ENCODE measurements at regions of chr6 and their contacts with region 1.

Region 1: DNA sequence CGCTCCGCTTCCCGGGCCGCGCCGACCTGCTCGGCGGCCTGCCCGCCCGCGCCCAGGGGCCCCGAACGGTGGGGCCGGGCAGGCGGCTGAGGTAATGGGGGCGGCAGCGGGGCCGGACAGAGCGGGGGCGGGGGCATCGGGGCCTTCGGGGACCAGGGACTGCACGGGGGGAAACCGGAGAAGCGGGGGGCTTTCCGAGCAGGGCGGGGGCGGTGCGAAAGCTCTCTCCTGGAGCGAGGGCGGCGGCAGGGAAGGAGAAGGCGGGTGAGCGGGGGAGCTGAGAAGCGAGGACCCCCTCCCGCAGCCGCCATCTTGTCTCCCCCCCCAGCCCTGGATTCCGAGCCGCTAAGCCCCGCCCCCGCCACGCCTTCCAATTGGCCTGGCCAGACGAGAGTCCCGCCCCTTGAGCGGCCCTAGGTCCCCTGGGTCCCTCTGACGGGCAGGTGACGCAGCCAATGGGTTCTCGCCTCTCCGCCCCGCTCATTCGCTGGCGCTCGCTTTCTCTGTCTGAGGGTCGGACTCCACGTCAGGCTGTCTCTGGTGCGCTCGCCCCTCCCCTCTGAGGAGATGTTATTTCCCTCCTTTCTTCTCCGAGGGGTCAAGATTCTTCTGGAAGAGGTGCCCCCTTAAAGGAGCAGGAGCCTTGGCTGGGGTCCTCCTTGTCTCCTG is 470 bp downstream of the BRPF3 start:
- DNase-seq: peak; percentile 99
- ATAC-seq: peak; percentile 96
- H3K4me3 Mint-ChIP-seq: peak overlapping the region; percentile 84
- H3K27ac Mint-ChIP-seq: peak overlapping the region; percentile 94
- H3K4me1 Mint-ChIP-seq: peaks cover 46% of the 10 kb centered on the region
- H3K27me3 Mint-ChIP-seq: peaks cover 2% of the 10 kb centered on the region

Region 2: GRCh38 chr6:36083446-36083845 is 113.6 kb before region 1 on chr6:
- CTCF ChIA-PET with region 1: no interaction called
- POLR2A ChIA-PET with region 1: no interaction called
- DNase-seq: no peak
- ATAC-seq: no peak
- H3K4me3 Mint-ChIP-seq: no peak overlapping the region
- H3K27ac Mint-ChIP-seq: no peak overlapping the region
- H3K4me1 Mint-ChIP-seq: no peaks in the 10 kb centered on the region
- H3K27me3 Mint-ChIP-seq: no peaks in the 10 kb centered on the region

Region 3: DNA sequence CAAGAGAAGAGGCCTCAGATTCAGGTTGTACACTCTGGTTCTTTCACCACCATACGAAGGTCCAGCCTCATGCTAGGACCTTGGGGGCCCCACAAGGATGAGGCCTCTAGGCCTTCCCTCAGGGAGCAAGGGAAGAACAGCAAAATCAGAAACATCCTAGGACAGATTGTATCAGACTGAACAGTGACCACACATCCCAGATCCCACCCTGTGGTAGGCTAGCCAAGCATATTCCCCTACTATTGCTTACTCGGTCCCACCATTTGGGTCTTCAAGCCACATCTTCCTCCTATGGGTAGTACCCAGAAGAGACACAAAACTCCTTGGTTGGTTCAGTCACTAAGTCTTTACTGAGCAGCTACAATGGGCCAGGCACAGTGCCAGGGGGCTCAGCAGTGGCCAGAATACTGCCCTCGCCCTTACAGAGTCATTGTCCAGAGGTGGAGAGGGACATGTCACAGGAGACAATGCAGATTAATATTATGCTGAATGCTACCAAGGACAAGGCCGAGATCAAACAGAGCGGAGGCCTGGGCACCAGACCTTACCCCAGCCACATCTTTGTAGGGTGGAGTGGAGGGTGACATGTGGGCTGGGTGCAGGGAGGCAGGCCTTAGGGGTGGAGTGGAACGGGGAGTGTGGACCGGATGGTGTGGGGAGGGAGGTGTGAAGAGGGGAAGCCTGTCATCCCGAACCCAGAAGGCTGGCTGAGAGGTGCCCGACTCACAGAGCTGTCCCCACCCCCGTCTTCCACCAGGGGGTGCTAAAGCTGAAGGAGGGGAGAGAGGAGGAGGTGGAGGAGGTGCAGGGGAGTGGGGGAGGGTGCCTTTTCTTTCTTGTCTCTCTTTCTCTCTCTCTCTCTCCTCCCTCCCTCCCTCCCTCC is 73.5 kb before region 1 on chr6:
- CTCF ChIA-PET with region 1: interaction called, 14 read pairs
- POLR2A ChIA-PET with region 1: interaction called, 15 read pairs
- DNase-seq: peak; percentile 95
- ATAC-seq: peak; percentile 80
- H3K4me3 Mint-ChIP-seq: no peak overlapping the region
- H3K27ac Mint-ChIP-seq: peak overlapping the region; percentile 98
- H3K4me1 Mint-ChIP-seq: peaks cover 91% of the 10 kb centered on the region
- H3K27me3 Mint-ChIP-seq: no peaks in the 10 kb centered on the region

Region 4: GRCh38 chr6:36131511-36132245 is 65.3 kb before region 1 on chr6:
- CTCF ChIA-PET with region 1: interaction called, 10 read pairs
- POLR2A ChIA-PET with region 1: interaction called, 9 read pairs
- DNase-seq: peak; percentile 69
- ATAC-seq: peak; percentile 73
- H3K4me3 Mint-ChIP-seq: peak overlapping the region; percentile 86
- H3K27ac Mint-ChIP-seq: peak overlapping the region; percentile 93
- H3K4me1 Mint-ChIP-seq: peaks cover 62% of the 10 kb centered on the region
- H3K27me3 Mint-ChIP-seq: no peaks in the 10 kb centered on the region

Region 5: DNA sequence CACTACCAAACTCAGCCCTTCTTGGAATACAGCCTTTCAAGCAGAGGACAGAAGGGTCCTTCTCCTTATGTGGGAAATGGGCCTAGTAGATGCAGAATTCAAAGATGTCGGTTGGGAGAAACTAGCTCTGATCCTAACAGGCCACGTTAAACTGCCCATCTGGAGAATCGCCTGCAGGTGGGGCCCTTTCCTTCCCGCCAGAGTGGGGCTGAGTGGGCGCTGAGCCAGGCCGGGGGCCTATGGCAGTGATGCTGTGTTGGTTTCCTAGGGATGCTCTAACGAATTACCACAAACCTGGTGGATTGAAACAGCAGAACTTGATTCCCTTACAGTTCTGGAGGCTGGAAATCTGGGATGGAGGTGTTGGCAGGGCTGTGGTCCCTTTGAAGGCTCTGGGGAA is 57.6 kb before region 1 on chr6:
- CTCF ChIA-PET with region 1: interaction called, 10 read pairs
- POLR2A ChIA-PET with region 1: no interaction called
- DNase-seq: no peak
- ATAC-seq: no peak
- H3K4me3 Mint-ChIP-seq: no peak overlapping the region
- H3K27ac Mint-ChIP-seq: no peak overlapping the region
- H3K4me1 Mint-ChIP-seq: peaks cover 22% of the 10 kb centered on the region
- H3K27me3 Mint-ChIP-seq: no peaks in the 10 kb centered on the region